PC-3 (cell line): ENCODE measurements at regions of chr14 and their contacts with region 1.

Region 1: DNA sequence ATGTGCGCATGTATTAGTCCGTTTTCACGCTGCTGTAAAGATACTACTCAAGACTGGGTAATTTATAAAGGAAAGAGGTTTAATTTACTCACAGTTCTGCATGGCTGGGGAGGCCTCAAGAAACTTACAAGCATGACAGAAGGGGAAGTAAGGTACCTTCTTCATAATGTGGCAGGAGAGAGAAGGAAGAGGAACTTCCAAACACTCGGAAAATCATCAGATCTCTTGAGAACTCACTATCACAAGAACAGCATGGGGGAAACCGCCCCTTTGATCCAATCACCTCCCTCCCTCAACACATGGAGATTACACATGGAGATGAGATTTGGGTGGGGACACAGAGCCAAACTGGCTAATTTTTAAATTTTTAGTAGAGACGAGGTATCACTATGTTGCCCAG is 41.8 kb upstream of the SNX6 start:
- DNase-seq: no peak
- ATAC-seq: no peak
- H3K4me3 ChIP-seq: no peak overlapping the region
- H3K27ac ChIP-seq: no peak overlapping the region
- H3K4me1 ChIP-seq: peaks cover 3% of the 10 kb centered on the region
- H3K27me3 ChIP-seq: no peaks in the 10 kb centered on the region
- CTCF ChIP-seq: no peak

Region 2: GRCh38 chr14:34619471-34619870 is 52.2 kb before region 1 on chr14:
- CTCF ChIA-PET with region 1: no interaction called
- POLR2A ChIA-PET with region 1: no interaction called
- intact Hi-C with region 1: no loop called
- DNase-seq: no peak
- ATAC-seq: no peak
- H3K4me3 ChIP-seq: no peak overlapping the region
- H3K27ac ChIP-seq: no peak overlapping the region
- H3K4me1 ChIP-seq: no peaks in the 10 kb centered on the region; the same call in 1 of the 2 replicates
- H3K27me3 ChIP-seq: no peaks in the 10 kb centered on the region
- CTCF ChIP-seq: no peak

Region 3: GRCh38 chr14:34722717-34723545 is 51.2 kb after region 1 on chr14:
- CTCF ChIA-PET with region 1: interaction called, 8 read pairs
- POLR2A ChIA-PET with region 1: interaction called, 4 read pairs
- intact Hi-C with region 1: loop called (anchors 1 kb)
- DNase-seq: peak; percentile 77
- ATAC-seq: peak; percentile 76
- H3K4me3 ChIP-seq: no peak overlapping the region
- H3K27ac ChIP-seq: no peak overlapping the region
- H3K4me1 ChIP-seq: 0 out of 2 replicates have a peak, but pooled peaks cover 3% of the 10 kb centered on the region
- H3K27me3 ChIP-seq: no peaks in the 10 kb centered on the region
- CTCF ChIP-seq: peak; percentile 83